GM12878 (cell line): ENCODE measurements at regions of chr2 and their contacts with region 1.

Region 1: DNA sequence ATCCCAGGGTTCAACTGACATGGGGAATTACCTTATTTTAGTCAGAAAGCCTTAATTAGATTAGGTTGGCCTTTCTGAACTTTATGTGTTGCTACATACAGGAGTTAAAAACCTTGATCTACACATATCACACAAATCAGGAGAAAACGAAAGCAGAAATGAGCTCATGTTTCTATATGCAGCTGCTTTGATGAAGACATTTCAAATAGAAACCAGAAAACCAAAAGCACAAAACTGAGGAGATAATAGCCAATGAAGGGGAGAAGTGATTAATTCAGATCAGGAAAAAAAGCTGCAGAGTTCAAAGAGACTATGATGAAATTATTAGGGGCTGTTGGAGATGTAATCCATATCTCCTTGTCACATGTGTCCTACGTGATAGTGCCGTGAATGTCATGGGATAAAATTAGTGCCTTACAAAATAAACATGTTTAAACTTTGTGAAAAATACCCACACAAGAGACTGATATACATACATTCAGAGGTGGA is 255.0 kb downstream of the CAMKMT start:
- DNase-seq: peak; percentile 65
- ATAC-seq: peak; percentile 93
- H3K4me3 ChIP-seq: peak overlapping the region; percentile 42
- H3K27ac ChIP-seq: peak overlapping the region; percentile 71
- H3K4me1 ChIP-seq: peaks cover 26% of the 10 kb centered on the region
- H3K27me3 ChIP-seq: no peaks in the 10 kb centered on the region
- CTCF ChIP-seq: no peak
- EP300 ChIP-seq: peak; percentile 37 to 72; a peak in 2 of 4 replicates
- POLR2A ChIP-seq: no peak
- RAD21 ChIP-seq: no peak

Region 2: GRCh38 chr2:44596537-44597320 is 20.0 kb before region 1 on chr2:
- CTCF ChIA-PET with region 1: interaction called, 10 read pairs
- POLR2A ChIA-PET with region 1: interaction called, 29 read pairs
- RAD21 ChIA-PET with region 1: interaction called, 58 read pairs
- SMC1A ChIA-PET with region 1: interaction called, 138 read pairs
- in situ Hi-C with region 1: no loop called
- intact Hi-C with region 1: no loop called
- DNase-seq: peak; percentile 53
- ATAC-seq: peak; percentile 93
- H3K4me3 ChIP-seq: no peak overlapping the region
- H3K27ac ChIP-seq: no peak overlapping the region
- H3K4me1 ChIP-seq: peaks cover 3% of the 10 kb centered on the region; the same call in 1 of the 2 replicates
- H3K27me3 ChIP-seq: no peaks in the 10 kb centered on the region
- CTCF ChIP-seq: no peak
- EP300 ChIP-seq: peak; percentile 68 to 79; a peak in 2 of 4 replicates
- POLR2A ChIP-seq: no peak
- RAD21 ChIP-seq: no peak

Region 3: DNA sequence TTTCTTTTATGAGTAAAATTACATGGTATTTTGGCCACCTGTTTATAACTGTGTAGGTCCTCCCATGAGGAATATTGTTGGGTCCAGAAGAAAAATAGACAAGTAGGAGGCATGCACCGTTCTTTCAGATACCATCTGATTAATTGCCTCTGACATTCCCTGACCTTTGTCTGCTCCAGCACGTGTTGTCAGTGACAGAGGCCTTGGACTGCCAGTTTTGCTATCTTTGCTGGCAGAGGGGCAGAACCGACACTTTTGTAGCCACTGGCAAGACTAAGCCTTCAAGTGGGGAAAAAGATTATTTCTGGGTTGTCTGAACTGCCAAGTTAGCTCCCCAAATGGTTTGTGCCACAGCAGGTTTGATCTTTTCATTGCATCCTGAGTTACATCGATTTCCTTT is 21.9 kb after region 1 on chr2:
- CTCF ChIA-PET with region 1: interaction called, 4 read pairs
- POLR2A ChIA-PET with region 1: interaction called, 3 read pairs
- RAD21 ChIA-PET with region 1: interaction called, 5 read pairs
- SMC1A ChIA-PET with region 1: interaction called, 21 read pairs
- in situ Hi-C with region 1: no loop called
- intact Hi-C with region 1: no loop called
- DNase-seq: no peak
- ATAC-seq: no peak
- H3K4me3 ChIP-seq: no peak overlapping the region
- H3K27ac ChIP-seq: no peak overlapping the region
- H3K4me1 ChIP-seq: no peaks in the 10 kb centered on the region
- H3K27me3 ChIP-seq: no peaks in the 10 kb centered on the region
- CTCF ChIP-seq: no peak
- EP300 ChIP-seq: no peak
- POLR2A ChIP-seq: no peak
- RAD21 ChIP-seq: no peak

Region 4: GRCh38 chr2:44668336-44668735 is 51.6 kb after region 1 on chr2:
- CTCF ChIA-PET with region 1: interaction called, 12 read pairs
- POLR2A ChIA-PET with region 1: no interaction called
- RAD21 ChIA-PET with region 1: no interaction called
- SMC1A ChIA-PET with region 1: interaction called, 9 read pairs
- in situ Hi-C with region 1: no loop called
- intact Hi-C with region 1: no loop called
- DNase-seq: no peak
- ATAC-seq: peak; percentile 73
- H3K4me3 ChIP-seq: no peak overlapping the region
- H3K27ac ChIP-seq: no peak overlapping the region
- H3K4me1 ChIP-seq: no peaks in the 10 kb centered on the region
- H3K27me3 ChIP-seq: no peaks in the 10 kb centered on the region
- CTCF ChIP-seq: peak; percentile 38 to 55 (median 47); a peak in 5 of 6 replicates
- EP300 ChIP-seq: no peak
- POLR2A ChIP-seq: no peak
- RAD21 ChIP-seq: peak; percentile 64

Region 5: DNA sequence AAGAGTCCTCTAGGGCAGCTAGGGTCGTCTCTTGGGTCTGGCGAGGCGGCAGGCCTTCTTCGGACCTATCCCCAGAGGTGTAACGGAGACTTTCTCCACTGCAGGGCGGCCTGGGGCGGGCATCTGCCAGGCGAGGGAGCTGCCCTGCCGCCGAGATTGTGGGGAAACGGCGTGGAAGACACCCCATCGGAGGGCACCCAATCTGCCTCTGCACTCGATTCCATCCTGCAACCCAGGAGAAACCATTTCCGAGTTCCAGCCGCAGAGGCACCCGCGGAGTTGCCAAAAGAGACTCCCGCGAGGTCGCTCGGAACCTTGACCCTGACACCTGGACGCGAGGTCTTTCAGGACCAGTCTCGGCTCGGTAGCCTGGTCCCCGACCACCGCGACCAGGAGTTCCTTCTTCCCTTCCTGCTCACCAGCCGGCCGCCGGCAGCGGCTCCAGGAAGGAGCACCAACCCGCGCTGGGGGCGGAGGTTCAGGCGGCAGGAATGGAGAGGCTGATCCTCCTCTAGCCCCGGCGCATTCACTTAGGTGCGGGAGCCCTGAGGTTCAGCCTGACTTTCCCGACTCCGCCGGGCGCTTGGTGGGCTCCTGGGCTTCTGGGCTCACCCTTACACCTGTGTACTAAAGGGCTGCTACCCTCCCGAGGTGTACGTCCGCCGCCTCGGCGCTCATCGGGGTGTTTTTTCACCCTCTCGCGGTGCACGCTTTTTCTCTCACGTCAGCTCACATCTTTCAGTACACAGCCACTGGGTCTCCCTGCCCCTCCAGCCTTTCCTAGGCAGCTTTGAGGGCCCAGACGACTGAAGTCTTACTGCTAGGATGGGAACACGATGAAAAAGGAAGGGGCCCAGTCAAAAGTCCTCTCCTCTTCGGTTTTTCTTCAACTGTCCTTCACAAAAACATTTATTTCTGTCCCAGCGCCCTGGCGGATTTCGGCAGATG is 384.5 kb after region 1 on chr2:
- CTCF ChIA-PET with region 1: no interaction called
- POLR2A ChIA-PET with region 1: no interaction called
- RAD21 ChIA-PET with region 1: no interaction called
- SMC1A ChIA-PET with region 1: no interaction called
- in situ Hi-C with region 1: no loop called
- intact Hi-C with region 1: no loop called
- DNase-seq: no peak
- ATAC-seq: no peak
- H3K4me3 ChIP-seq: no peak overlapping the region
- H3K27ac ChIP-seq: no peak overlapping the region
- H3K4me1 ChIP-seq: no peaks in the 10 kb centered on the region
- H3K27me3 ChIP-seq: peaks cover 34 to 38% of the 10 kb centered on the region in 2 experiments
- CTCF ChIP-seq: no peak
- EP300 ChIP-seq: no peak
- POLR2A ChIP-seq: no peak
- RAD21 ChIP-seq: no peak